ENCODE measurements at regions of chr4 and their contacts with region 1.

Region 1: GRCh38 chr4:139083956-139084803 is 68.6 kb downstream of the NOCT start:
- DNase-seq: peak; percentile 85
- ATAC-seq: peak; percentile 66
- H3K4me3 Mint-ChIP-seq: peak overlapping the region; percentile 99
- H3K27ac Mint-ChIP-seq: peak overlapping the region; percentile 99
- H3K4me1 Mint-ChIP-seq: peaks cover 33% of the 10 kb centered on the region
- H3K27me3 Mint-ChIP-seq: no peaks in the 10 kb centered on the region

Region 2: DNA sequence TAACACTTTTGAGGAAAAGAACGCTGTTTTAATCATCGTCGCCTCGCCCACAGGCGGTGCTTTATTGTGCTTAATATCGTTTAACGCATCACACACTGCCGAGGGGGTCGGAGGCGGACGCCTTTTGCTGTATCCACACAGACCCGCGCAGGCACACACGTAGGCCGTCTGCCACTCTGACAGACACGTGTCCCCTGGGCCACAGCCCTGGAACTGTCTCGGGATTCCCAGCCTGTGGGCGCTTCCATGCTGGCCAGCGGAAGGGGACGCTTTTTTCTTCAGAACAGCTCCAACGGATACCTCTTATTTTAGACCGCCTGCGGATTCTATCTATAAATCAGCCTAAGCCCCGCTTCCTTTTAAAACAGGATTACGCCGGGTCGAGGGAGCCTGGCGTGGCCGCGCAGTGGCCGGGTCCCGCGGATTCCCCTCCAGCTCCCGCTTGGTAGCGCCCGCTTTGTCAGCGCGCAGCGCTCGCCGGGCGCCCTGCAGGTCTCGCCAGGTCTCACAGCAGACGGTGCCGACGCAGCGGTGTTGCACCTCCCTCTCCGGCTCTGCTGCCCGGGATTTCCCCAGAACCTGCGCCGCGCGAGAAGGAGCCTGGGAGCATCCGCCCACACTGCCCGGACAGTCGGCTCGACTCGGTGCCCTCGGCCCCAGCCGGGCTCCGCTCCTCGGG is 68.8 kb before region 1 on chr4 and contains the start of gene NOCT:
- CTCF ChIA-PET with region 1: interaction called, 6 read pairs
- POLR2A ChIA-PET with region 1: interaction called, 24 read pairs
- DNase-seq: peak; percentile 94
- ATAC-seq: peak; percentile 97
- H3K4me3 Mint-ChIP-seq: peak within 1 kb of the TSS; percentile 93
- H3K27ac Mint-ChIP-seq: peak within 1 kb of the TSS; percentile 96
- H3K4me1 Mint-ChIP-seq: peaks cover 38% of the 10 kb centered on the region
- H3K27me3 Mint-ChIP-seq: no peaks in the 10 kb centered on the region
- total RNA-seq, gene NOCT: 8.6 to 9.3 TPM

Region 3: DNA sequence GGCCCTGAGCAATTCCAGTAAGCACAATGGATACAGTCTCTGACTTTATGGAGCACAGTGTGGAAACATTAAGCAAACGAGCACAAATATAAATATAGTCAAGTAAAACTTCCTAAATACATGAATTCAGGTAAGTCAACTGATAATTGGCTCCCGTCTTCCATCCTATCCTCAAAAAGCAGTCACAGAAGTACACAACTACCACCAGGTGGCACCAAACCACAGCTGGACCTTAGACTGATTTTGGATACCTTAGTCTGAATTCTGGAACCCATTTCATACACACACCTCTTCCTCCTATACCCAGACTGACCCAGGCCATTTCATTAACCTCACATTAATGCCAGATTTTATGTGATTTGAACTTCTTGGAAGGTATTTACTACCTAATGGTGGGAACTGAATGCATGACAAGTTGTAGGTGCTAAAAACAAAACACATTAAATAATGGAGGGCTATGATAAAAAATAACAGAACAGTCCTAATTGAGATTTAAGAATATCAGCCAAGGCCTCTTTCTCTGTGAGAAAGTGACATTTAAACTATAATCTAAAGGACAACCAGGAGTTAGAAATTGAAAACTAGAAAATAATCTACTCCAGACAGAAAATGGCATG is 15.3 kb after region 1 on chr4:
- CTCF ChIA-PET with region 1: interaction called, 14 read pairs
- POLR2A ChIA-PET with region 1: no interaction called
- DNase-seq: peak; percentile 82
- ATAC-seq: peak; percentile 65
- H3K4me3 Mint-ChIP-seq: no peak overlapping the region
- H3K27ac Mint-ChIP-seq: no peak overlapping the region
- H3K4me1 Mint-ChIP-seq: no peaks in the 10 kb centered on the region
- H3K27me3 Mint-ChIP-seq: no peaks in the 10 kb centered on the region